GM13976 (cell line): ENCODE measurements at regions of chr6 and their contacts with region 1.

Region 1: DNA sequence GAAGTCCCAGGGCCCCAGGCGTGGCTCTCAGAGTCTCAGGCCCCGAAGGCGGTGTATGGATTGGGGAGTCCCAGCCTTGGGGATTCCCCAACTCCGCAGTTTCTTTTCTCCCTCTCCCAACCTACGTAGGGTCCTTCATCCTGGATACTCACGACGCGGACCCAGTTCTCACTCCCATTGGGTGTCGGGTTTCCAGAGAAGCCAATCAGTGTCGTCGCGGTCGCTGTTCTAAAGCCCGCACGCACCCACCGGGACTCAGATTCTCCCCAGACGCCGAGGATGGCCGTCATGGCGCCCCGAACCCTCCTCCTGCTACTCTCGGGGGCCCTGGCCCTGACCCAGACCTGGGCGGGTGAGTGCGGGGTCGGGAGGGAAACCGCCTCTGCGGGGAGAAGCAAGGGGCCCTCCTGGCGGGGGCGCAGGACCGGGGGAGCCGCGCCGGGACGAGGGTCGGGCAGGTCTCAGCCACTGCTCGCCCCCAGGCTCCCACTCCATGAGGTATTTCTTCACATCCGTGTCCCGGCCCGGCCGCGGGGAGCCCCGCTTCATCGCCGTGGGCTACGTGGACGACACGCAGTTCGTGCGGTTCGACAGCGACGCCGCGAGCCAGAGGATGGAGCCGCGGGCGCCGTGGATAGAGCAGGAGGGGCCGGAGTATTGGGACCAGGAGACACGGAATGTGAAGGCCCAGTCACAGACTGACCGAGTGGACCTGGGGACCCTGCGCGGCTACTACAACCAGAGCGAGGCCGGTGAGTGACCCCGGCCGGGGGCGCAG is at the start of gene HLA-A:
- DNase-seq: peak; percentile 93
- CTCF ChIP-seq: no peak

Region 2: GRCh38 chr6:29887819-29888776 is 54.4 kb before region 1 on chr6:
- in situ Hi-C with region 1: loop called (anchors 5 kb)
- DNase-seq: peak; percentile 87
- CTCF ChIP-seq: no peak

Region 3: DNA sequence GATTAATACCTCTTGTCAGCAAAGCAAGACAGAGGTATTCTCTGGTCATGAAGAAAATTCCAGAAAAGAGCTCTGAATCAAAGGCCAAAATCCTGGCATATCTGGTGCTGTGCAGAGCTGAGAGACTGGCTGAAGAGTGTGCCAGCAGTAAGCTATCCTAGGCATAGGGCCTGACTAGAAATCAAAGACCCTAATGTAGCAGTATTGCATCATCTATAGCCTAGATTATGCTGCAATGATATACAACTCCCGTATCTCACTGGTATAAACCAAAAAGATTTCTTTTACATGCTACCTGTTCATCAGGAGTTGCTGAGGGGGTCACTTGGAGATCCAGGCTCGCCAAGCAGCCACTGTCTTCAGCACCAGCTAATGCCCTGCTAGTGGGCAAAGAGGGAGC is 353.4 kb after region 1 on chr6:
- in situ Hi-C with region 1: no loop called
- DNase-seq: no peak
- CTCF ChIP-seq: no peak

Region 4: DNA sequence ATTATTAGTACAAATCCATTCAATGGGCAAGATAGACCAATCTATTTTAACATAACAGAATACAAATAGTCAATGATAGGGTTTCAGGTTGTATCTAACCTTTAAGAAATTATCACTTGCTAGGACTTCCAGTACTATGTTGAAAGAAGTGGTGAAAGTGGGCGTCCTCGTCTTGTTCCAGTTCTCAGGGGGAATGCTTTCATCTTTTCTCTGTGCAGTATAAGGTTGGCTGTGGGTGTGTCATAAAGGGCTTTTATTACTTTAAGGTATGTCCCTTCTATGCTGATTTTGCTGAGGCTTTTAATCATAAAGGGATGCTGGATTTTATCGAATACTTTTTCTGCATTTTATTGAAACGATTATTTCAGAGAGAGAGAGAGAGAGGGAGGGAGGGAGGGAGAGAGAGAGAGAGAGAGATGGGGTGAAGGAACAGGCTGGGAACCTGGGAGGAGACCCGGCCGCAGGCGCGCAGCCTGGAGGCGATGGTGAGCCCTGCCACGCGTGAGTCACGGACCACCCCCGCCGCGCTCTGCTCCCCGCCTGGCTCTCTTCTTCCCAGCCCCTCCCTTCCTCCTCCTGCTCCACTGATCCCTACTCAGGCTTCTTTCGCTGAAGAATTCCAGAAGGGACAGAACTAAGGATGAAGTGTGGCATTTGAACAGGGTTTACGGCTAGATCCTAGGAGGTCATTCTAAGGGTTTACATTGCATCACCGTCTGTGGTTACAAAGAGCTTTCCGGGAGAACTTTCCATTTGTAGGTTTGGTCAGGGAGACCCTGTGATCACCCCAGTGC is 501.4 kb after region 1 on chr6:
- in situ Hi-C with region 1: no loop called
- DNase-seq: no peak
- CTCF ChIP-seq: no peak